CD4-positive, alpha-beta memory T cell (primary cell): ENCODE measurements at regions of chr11 and their contacts with region 1.

Region 1: DNA sequence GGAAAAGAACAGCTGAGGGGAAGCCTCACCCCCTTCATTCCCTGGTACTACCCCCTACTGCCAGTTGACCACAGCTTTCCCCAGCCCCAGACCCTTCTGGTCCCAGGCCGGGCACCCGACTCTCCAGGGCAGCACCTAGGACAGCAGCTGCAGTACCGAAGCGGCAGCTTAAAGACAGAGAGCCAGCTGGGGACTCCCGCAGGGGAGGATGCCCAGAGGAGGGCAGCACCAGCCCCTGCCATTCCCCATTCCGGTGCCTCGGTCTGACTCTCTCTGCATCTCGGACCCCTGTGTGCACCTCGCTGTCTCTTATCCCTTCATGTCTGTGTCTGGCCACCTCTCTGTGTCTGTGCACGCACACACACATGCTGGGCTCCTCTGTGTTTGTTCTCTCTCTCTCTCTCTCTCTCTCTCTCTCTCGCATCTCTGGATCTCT is 9.4 kb downstream of the IGSF9B start:
- DNase-seq: peak; percentile 70 to 81 (median 78)
- H3K4me3 ChIP-seq: peak overlapping the region; percentile 9 to 38
- H3K4me3 Mint-ChIP-seq: peak overlapping the region; percentile 56 to 90 (median 80)
- H3K27ac ChIP-seq: peak overlapping the region; percentile 12
- H3K27ac Mint-ChIP-seq: peak overlapping the region; percentile 81 to 97 (median 92)
- H3K4me1 ChIP-seq: peaks cover 73% of the 10 kb centered on the region
- H3K4me1 Mint-ChIP-seq: peaks cover 43 to 81% (median 62%) of the 10 kb centered on the region in 4 donors
- H3K27me3 ChIP-seq: no peaks in the 10 kb centered on the region
- H3K27me3 Mint-ChIP-seq: peaks cover 0 to 10% of the 10 kb centered on the region in 2 donors

Region 2: DNA sequence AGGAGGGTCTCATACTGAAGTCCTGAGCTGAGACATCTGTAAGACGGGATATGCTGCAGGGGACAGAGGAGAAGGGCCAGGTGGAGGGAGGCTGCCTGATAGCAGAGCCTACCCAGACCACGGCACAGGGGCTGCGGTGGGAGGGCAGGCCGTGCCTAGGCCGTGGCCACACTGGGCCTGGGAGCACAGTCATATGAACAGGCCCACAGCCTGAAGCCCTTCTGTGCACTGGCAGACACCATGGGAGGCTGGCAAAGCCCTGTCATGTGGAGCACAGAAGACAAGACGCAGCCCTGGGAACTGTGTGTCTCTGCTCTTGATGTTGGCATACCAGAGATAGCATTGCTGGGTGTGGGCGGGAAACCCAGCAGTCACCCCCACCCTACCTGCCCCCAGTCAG is 105.3 kb before region 1 on chr11:
- CTCF ChIA-PET with region 1: no interaction called
- POLR2A ChIA-PET with region 1: no interaction called
- intact Hi-C with region 1: no loop called
- DNase-seq: no peak
- H3K4me3 ChIP-seq: no peak overlapping the region
- H3K4me3 Mint-ChIP-seq: no peak overlapping the region
- H3K27ac ChIP-seq: no peak overlapping the region
- H3K27ac Mint-ChIP-seq: no peak overlapping the region
- H3K4me1 ChIP-seq: no peaks in the 10 kb centered on the region
- H3K4me1 Mint-ChIP-seq: peaks cover 0 to 2% (median 0%) of the 10 kb centered on the region in 4 donors
- H3K27me3 ChIP-seq: no peaks in the 10 kb centered on the region
- H3K27me3 Mint-ChIP-seq: peaks cover 4 to 7% of the 10 kb centered on the region in 2 donors

Region 3: GRCh38 chr11:133937015-133937414 is 10.3 kb before region 1 on chr11:
- CTCF ChIA-PET with region 1: interaction called, 17 read pairs
- POLR2A ChIA-PET with region 1: interaction called, 3 read pairs
- intact Hi-C with region 1: no loop called
- DNase-seq: no peak
- H3K4me3 ChIP-seq: no peak overlapping the region
- H3K4me3 Mint-ChIP-seq: no peak overlapping the region
- H3K27ac ChIP-seq: no peak overlapping the region
- H3K27ac Mint-ChIP-seq: no peak overlapping the region
- H3K4me1 ChIP-seq: no peaks in the 10 kb centered on the region
- H3K4me1 Mint-ChIP-seq: peaks cover 0 to 22% (median 12%) of the 10 kb centered on the region in 4 donors
- H3K27me3 ChIP-seq: no peaks in the 10 kb centered on the region
- H3K27me3 Mint-ChIP-seq: no peaks in the 10 kb centered on the region

Region 4: DNA sequence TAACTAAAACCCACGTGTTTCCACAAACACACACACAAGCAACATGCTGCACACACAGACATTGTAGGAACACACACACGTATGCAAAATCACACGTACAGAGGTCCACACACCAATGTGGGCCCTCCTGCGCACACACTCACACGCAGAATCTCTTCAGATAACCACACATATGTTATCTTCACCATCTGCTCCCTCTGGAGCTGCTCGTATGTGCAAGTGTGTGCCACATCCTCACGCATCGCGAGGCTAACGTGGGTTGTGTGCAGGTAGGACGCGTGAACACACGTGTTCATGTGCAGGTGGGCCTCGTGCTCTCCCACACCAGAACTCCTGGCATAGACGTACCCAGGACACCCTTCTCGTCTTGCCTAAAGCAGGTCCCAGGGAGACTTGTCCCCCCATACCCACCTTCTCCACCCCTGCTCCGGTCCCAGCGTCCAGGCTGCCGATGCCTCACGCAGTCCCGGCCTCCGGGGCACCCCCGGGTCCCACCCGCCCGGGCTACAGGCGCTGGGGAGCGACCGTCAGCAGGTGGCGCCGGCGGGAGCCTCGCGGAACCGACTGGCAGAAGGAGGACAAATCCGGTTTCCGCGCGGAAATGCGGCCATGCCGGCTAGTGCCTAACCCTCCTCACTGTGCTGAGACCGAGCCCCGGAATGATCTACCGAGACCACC is 19.7 kb after region 1 on chr11:
- CTCF ChIA-PET with region 1: interaction called, 4 read pairs
- POLR2A ChIA-PET with region 1: no interaction called
- intact Hi-C with region 1: loop called (anchors 1 kb)
- DNase-seq: peak; percentile 48 to 64 (median 58)
- H3K4me3 ChIP-seq: peak overlapping the region; percentile 52 to 62
- H3K4me3 Mint-ChIP-seq: peak overlapping the region; percentile 84 to 98 (median 93)
- H3K27ac ChIP-seq: no peak overlapping the region
- H3K27ac Mint-ChIP-seq: peak overlapping the region in 5 of 7 donors; percentile 62 to 95 (median 92)
- H3K4me1 ChIP-seq: peaks cover 8% of the 10 kb centered on the region
- H3K4me1 Mint-ChIP-seq: peaks cover 6 to 13% (median 11%) of the 10 kb centered on the region in 4 donors
- H3K27me3 ChIP-seq: no peaks in the 10 kb centered on the region
- H3K27me3 Mint-ChIP-seq: peaks cover 4 to 8% of the 10 kb centered on the region in 2 donors

Region 5: GRCh38 chr11:134033696-134034491 is 86.6 kb after region 1 on chr11:
- CTCF ChIA-PET with region 1: interaction called, 4 read pairs
- POLR2A ChIA-PET with region 1: interaction called, 20 read pairs
- intact Hi-C with region 1: loop called (anchors 5 kb)
- DNase-seq: peak; percentile 36 to 75 (median 50)
- H3K4me3 ChIP-seq: peak overlapping the region in 1 of 2 donors; percentile 29
- H3K4me3 Mint-ChIP-seq: peak overlapping the region in 7 of 8 donors; percentile 57 to 87 (median 70)
- H3K27ac ChIP-seq: peak overlapping the region; percentile 5
- H3K27ac Mint-ChIP-seq: peak overlapping the region; percentile 59 to 87 (median 67)
- H3K4me1 ChIP-seq: peaks cover 50% of the 10 kb centered on the region
- H3K4me1 Mint-ChIP-seq: peaks cover 27 to 70% (median 45%) of the 10 kb centered on the region in 4 donors
- H3K27me3 ChIP-seq: no peaks in the 10 kb centered on the region
- H3K27me3 Mint-ChIP-seq: no peaks in the 10 kb centered on the region

Region 6: GRCh38 chr11:134040386-134041302 is 93.3 kb after region 1 on chr11:
- CTCF ChIA-PET with region 1: interaction called, 11 read pairs
- POLR2A ChIA-PET with region 1: interaction called, 20 read pairs
- intact Hi-C with region 1: loop called (anchors 5 kb)
- DNase-seq: no peak
- H3K4me3 ChIP-seq: no peak overlapping the region
- H3K4me3 Mint-ChIP-seq: peak overlapping the region in 2 of 8 donors; percentile 15 to 26
- H3K27ac ChIP-seq: no peak overlapping the region
- H3K27ac Mint-ChIP-seq: peak overlapping the region in 3 of 7 donors; percentile 0 to 57 (median 23)
- H3K4me1 ChIP-seq: peaks cover 18% of the 10 kb centered on the region
- H3K4me1 Mint-ChIP-seq: peaks cover 8 to 23% (median 14%) of the 10 kb centered on the region in 4 donors
- H3K27me3 ChIP-seq: no peaks in the 10 kb centered on the region
- H3K27me3 Mint-ChIP-seq: peaks cover 0 to 3% of the 10 kb centered on the region in 2 donors

Region 7: DNA sequence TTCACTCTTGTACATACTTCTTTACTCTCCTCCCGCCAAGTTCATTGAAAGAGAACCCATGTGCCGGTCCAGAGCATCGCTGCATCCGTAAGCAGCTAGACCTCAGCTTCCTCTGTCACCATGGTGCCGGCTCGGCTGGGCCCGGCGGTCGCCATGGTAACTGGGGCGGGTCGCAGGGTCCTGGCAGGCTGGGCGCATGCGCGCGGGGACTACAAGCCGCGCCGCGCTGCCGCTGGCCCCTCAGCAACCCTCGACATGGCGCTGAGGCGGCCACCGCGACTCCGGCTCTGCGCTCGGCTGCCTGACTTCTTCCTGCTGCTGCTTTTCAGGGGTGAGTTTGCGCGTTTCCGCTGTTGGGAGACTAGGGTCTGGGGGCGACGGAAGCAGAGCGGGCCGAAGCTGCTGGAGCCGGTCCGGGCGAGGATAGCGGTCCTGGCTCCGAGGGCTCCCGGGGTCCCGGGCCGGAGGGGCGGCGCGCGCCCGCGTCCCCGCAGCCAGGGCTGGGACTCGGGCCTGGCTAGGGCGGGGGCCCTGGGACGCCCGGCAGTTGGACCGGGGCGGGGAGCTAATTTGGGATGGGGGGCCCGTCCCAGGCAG is 121.6 kb after region 1 on chr11 and contains the start of gene JAM3:
- CTCF ChIA-PET with region 1: interaction called, 3 read pairs
- POLR2A ChIA-PET with region 1: interaction called, 5 read pairs
- intact Hi-C with region 1: loop called (anchors 5 kb)
- DNase-seq: peak; percentile 96 to 98 (median 97)
- H3K4me3 ChIP-seq: peak within 1 kb of the TSS in 1 of 2 donors; percentile 48
- H3K4me3 Mint-ChIP-seq: peak within 1 kb of the TSS; percentile 87 to 95 (median 92)
- H3K27ac ChIP-seq: no peak within 1 kb of the TSS
- H3K27ac Mint-ChIP-seq: peak within 1 kb of the TSS; percentile 72 to 98 (median 97)
- H3K4me1 ChIP-seq: peaks cover 7% of the 10 kb centered on the region
- H3K4me1 Mint-ChIP-seq: peaks cover 5 to 14% (median 9%) of the 10 kb centered on the region in 4 donors
- H3K27me3 ChIP-seq: no peaks in the 10 kb centered on the region
- H3K27me3 Mint-ChIP-seq: peaks cover 2 to 5% of the 10 kb centered on the region in 2 donors
- total RNA-seq, gene JAM3: 6.8 to 8.3 TPM

Region 8: GRCh38 chr11:134139873-134140331 is 192.6 kb after region 1 on chr11:
- CTCF ChIA-PET with region 1: interaction called, 9 read pairs
- POLR2A ChIA-PET with region 1: interaction called, 3 read pairs
- intact Hi-C with region 1: loop called (anchors 1 kb)
- DNase-seq: peak; percentile 46 to 52 (median 50)
- H3K4me3 ChIP-seq: no peak overlapping the region
- H3K4me3 Mint-ChIP-seq: no peak overlapping the region
- H3K27ac ChIP-seq: no peak overlapping the region
- H3K27ac Mint-ChIP-seq: no peak overlapping the region
- H3K4me1 ChIP-seq: no peaks in the 10 kb centered on the region
- H3K4me1 Mint-ChIP-seq: peaks cover 0 to 8% (median 5%) of the 10 kb centered on the region in 4 donors
- H3K27me3 ChIP-seq: no peaks in the 10 kb centered on the region
- H3K27me3 Mint-ChIP-seq: no peaks in the 10 kb centered on the region